Natural killer cell (primary cell): ENCODE measurements at regions of chr18 and their contacts with region 1.

Region 1: GRCh38 chr18:45690975-45691815 is 32.8 kb upstream of the SLC14A1 start:
- DNase-seq: peak; percentile 74 to 88
- ATAC-seq: no peak
- H3K4me3 ChIP-seq: no peak overlapping the region
- H3K4me3 Mint-ChIP-seq: no peak overlapping the region
- H3K27ac ChIP-seq: no peak overlapping the region
- H3K27ac Mint-ChIP-seq: peak overlapping the region in 1 of 2 donors; percentile 52
- H3K4me1 ChIP-seq: peaks cover 44% of the 10 kb centered on the region
- H3K4me1 Mint-ChIP-seq: peaks cover 44 to 49% of the 10 kb centered on the region in 2 donors
- H3K27me3 ChIP-seq: no peaks in the 10 kb centered on the region
- H3K27me3 Mint-ChIP-seq: peaks cover 0 to 2% of the 10 kb centered on the region in 2 donors
- CTCF ChIP-seq: peak; percentile 92

Region 2: GRCh38 chr18:45571714-45572113 is 119.5 kb before region 1 on chr18:
- intact Hi-C with region 1: no loop called
- DNase-seq: no peak
- ATAC-seq: no peak
- H3K4me3 ChIP-seq: no peak overlapping the region
- H3K4me3 Mint-ChIP-seq: no peak overlapping the region
- H3K27ac ChIP-seq: no peak overlapping the region
- H3K27ac Mint-ChIP-seq: no peak overlapping the region
- H3K4me1 ChIP-seq: no peaks in the 10 kb centered on the region
- H3K4me1 Mint-ChIP-seq: no peaks in the 10 kb centered on the region
- H3K27me3 ChIP-seq: no peaks in the 10 kb centered on the region
- H3K27me3 Mint-ChIP-seq: peaks cover 9 to 19% of the 10 kb centered on the region in 2 donors
- CTCF ChIP-seq: no peak

Region 3: DNA sequence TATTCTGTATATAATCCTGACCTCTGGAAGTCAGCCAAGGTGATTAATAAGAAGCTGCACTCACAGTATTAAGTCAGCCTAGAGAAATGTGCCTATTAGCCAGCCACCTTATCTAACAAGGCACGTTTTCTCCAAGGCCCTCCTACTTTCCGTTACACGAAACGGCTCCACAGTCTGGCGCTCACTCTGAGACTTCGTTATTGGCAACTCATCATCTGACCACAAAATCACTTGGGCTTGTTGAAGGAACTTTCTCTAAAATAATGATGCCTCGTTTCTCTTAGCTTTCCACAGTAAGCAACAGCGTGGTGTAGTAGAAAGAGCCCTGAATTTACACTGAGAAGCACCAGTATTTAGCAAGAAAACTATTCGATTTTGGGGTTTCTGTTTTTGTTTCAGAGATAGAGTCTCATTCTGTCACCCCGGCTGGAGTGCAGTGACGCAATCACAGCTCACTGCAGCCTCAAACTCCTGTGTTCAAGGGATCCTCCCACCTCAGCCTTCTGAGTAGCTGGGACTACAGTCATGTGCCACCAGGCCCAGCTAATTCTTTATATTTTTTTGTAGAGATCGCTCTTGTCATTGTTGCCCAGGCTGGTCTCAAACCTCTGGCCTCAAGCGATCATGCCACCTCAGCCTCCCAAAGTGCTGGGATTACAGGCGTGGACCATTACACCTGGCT is 20.8 kb before region 1 on chr18:
- intact Hi-C with region 1: loop called (anchors 1 kb)
- DNase-seq: peak; percentile 43 to 71
- ATAC-seq: peak; percentile 81 to 89 (median 86)
- H3K4me3 ChIP-seq: peak overlapping the region; percentile 22
- H3K4me3 Mint-ChIP-seq: peak overlapping the region; percentile 81
- H3K27ac ChIP-seq: peak overlapping the region; percentile 86
- H3K27ac Mint-ChIP-seq: peak overlapping the region; percentile 90 to 96
- H3K4me1 ChIP-seq: peaks cover 43% of the 10 kb centered on the region
- H3K4me1 Mint-ChIP-seq: peaks cover 44 to 57% of the 10 kb centered on the region in 2 donors
- H3K27me3 ChIP-seq: no peaks in the 10 kb centered on the region
- H3K27me3 Mint-ChIP-seq: no peaks in the 10 kb centered on the region
- CTCF ChIP-seq: no peak

Region 4: DNA sequence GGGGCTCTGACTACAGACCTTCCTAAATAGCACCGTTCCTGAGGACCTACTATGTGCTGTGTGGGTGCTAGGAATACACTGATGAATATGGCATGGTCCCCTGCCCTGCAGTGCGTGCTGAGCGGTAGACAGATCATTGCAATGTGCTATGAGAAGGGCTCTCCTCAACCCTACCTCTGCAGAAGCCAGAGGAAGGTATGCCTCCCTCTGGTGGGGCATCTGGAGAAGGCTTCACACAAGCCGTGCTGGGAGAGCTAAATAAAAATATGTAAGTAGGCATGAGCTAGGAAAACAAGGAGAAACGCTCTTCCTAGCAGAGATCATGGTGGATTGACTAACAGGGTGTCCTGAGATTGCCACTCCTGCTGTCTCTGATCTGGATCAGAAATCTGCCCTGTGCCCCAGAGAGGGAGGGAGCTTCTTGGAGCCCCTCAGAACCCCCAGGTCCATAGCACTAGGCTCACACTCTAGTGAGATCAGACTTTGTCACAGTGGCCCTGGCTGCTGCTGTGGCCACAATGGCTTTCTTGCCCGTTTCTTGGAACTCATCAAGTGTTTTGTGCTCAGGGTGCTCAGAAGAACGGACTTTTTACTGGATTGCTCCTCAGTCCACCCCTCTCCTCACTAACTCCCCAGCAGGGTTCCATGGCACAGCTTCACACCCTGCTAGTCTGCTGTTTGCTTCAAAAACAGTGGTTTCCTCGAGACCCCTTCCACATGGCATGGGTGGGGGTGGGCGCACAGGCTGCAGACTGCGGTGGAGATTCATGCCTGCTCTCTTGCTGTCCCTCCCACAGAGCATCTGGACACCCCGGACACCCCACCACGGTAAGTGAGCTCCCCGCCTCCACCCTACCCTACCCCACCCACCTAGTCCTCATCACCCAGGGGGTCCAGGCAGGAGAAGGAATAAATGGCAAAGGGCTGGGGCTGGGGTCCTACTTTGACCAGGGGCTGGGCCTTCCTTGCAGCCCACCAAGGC is 148.5 kb after region 1 on chr18:
- intact Hi-C with region 1: loop called (anchors 2 kb)
- DNase-seq: peak in 1 of 2 donors; percentile 61
- ATAC-seq: peak; percentile 55 to 61 (median 60)
- H3K4me3 ChIP-seq: no peak overlapping the region
- H3K4me3 Mint-ChIP-seq: peak overlapping the region; percentile 76
- H3K27ac ChIP-seq: no peak overlapping the region
- H3K27ac Mint-ChIP-seq: no peak overlapping the region
- H3K4me1 ChIP-seq: peaks cover 11% of the 10 kb centered on the region
- H3K4me1 Mint-ChIP-seq: peaks cover 18 to 25% of the 10 kb centered on the region in 2 donors
- H3K27me3 ChIP-seq: peaks cover 20% of the 10 kb centered on the region
- H3K27me3 Mint-ChIP-seq: peaks cover 17 to 31% of the 10 kb centered on the region in 2 donors
- CTCF ChIP-seq: no peak

Region 5: GRCh38 chr18:45879681-45880655 is 188.8 kb after region 1 on chr18:
- intact Hi-C with region 1: loop called (anchors 1 kb)
- DNase-seq: peak; percentile 70 to 84
- ATAC-seq: peak; percentile 91 to 96 (median 95)
- H3K4me3 ChIP-seq: no peak overlapping the region
- H3K4me3 Mint-ChIP-seq: no peak overlapping the region
- H3K27ac ChIP-seq: no peak overlapping the region
- H3K27ac Mint-ChIP-seq: peak overlapping the region; percentile 72 to 79
- H3K4me1 ChIP-seq: peaks cover 12% of the 10 kb centered on the region
- H3K4me1 Mint-ChIP-seq: peaks cover 21 to 23% of the 10 kb centered on the region in 2 donors
- H3K27me3 ChIP-seq: no peaks in the 10 kb centered on the region
- H3K27me3 Mint-ChIP-seq: no peaks in the 10 kb centered on the region
- CTCF ChIP-seq: peak; percentile 99

Region 6: GRCh38 chr18:45967007-45967706 is 276.0 kb after region 1 on chr18 and contains the start of gene EPG5:
- intact Hi-C with region 1: loop called (anchors 5 kb)
- DNase-seq: peak; percentile 89 to 94
- ATAC-seq: peak; percentile 82 to 95 (median 84)
- H3K4me3 ChIP-seq: peak within 1 kb of the TSS; percentile 79
- H3K4me3 Mint-ChIP-seq: peak within 1 kb of the TSS; percentile 99
- H3K27ac ChIP-seq: peak within 1 kb of the TSS; percentile 72
- H3K27ac Mint-ChIP-seq: peak within 1 kb of the TSS; percentile 93 to 97
- H3K4me1 ChIP-seq: peaks cover 16% of the 10 kb centered on the region
- H3K4me1 Mint-ChIP-seq: peaks cover 46% of the 10 kb centered on the region in 2 donors
- H3K27me3 ChIP-seq: no peaks in the 10 kb centered on the region
- H3K27me3 Mint-ChIP-seq: no peaks in the 10 kb centered on the region
- CTCF ChIP-seq: no peak
- total RNA-seq, gene EPG5: 81.3 to 133 (median 99.6) TPM

Region 7: GRCh38 chr18:46073474-46074331 is 382.5 kb after region 1 on chr18:
- intact Hi-C with region 1: loop called (anchors 5 kb)
- DNase-seq: peak in 1 of 2 donors; percentile 85
- ATAC-seq: peak; percentile 54 to 58 (median 56)
- H3K4me3 ChIP-seq: no peak overlapping the region
- H3K4me3 Mint-ChIP-seq: peak overlapping the region; percentile 62
- H3K27ac ChIP-seq: no peak overlapping the region
- H3K27ac Mint-ChIP-seq: peak overlapping the region; percentile 13 to 61
- H3K4me1 ChIP-seq: peaks cover 34% of the 10 kb centered on the region
- H3K4me1 Mint-ChIP-seq: peaks cover 35 to 43% of the 10 kb centered on the region in 2 donors
- H3K27me3 ChIP-seq: peaks cover 2% of the 10 kb centered on the region
- H3K27me3 Mint-ChIP-seq: no peaks in the 10 kb centered on the region
- CTCF ChIP-seq: peak; percentile 79

Region 8: DNA sequence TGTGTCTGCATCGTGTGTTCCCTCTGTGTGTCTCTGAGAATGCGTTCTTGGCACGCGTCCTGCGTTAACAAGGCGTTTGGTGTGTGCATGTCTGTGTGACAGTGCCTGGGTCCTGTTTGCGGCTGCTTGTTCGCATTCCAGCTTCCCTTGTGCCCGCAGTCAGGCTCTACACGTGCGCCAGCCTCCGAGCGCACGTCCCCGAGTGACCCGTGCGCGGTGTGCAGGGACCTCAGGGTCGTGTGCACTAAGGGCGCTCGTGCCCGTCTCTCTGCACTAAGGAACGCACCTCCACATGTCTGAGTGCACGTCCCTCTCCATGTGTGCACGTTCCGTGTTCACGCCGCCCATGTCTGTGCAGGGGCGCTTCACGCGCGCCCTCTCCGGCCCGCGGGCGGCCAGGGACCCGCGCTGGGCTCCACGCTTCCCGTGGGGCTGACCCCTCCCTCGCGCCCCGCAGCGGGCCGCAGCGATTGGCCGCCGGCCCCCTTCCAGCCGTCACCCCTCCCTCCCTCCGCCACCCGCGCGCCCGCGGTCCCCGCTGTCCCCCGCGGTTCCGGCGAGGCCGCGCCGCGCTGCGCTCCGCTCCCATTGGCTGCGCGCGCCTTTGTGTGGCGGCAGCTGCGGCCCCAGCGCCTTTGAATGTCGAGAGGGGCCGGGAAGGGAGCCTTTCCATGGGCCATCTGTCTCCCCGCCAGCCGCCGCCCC is 642.4 kb after region 1 on chr18:
- intact Hi-C with region 1: loop called (anchors 10 kb)
- DNase-seq: peak; percentile 18 to 55
- ATAC-seq: peak; percentile 33 to 57 (median 56)
- H3K4me3 ChIP-seq: peak overlapping the region; percentile 40
- H3K4me3 Mint-ChIP-seq: peak overlapping the region; percentile 87
- H3K27ac ChIP-seq: no peak overlapping the region
- H3K27ac Mint-ChIP-seq: peak overlapping the region; percentile 64 to 78
- H3K4me1 ChIP-seq: peaks cover 45% of the 10 kb centered on the region
- H3K4me1 Mint-ChIP-seq: peaks cover 59% of the 10 kb centered on the region in 2 donors
- H3K27me3 ChIP-seq: no peaks in the 10 kb centered on the region
- H3K27me3 Mint-ChIP-seq: no peaks in the 10 kb centered on the region
- CTCF ChIP-seq: no peak